ENCODE measurements at regions of chr1 and their contacts with region 1.

Region 1: GRCh38 chr1:59971464-59971911 is 44.9 kb upstream of the CYP2J2 start:
- DNase-seq: peak; percentile 75
- ATAC-seq: peak; percentile 88

Region 2: GRCh38 chr1:59750328-59751003 is 221.0 kb before region 1 on chr1:
- intact Hi-C with region 1: no loop called
- DNase-seq: no peak
- ATAC-seq: peak; percentile 17

Region 3: DNA sequence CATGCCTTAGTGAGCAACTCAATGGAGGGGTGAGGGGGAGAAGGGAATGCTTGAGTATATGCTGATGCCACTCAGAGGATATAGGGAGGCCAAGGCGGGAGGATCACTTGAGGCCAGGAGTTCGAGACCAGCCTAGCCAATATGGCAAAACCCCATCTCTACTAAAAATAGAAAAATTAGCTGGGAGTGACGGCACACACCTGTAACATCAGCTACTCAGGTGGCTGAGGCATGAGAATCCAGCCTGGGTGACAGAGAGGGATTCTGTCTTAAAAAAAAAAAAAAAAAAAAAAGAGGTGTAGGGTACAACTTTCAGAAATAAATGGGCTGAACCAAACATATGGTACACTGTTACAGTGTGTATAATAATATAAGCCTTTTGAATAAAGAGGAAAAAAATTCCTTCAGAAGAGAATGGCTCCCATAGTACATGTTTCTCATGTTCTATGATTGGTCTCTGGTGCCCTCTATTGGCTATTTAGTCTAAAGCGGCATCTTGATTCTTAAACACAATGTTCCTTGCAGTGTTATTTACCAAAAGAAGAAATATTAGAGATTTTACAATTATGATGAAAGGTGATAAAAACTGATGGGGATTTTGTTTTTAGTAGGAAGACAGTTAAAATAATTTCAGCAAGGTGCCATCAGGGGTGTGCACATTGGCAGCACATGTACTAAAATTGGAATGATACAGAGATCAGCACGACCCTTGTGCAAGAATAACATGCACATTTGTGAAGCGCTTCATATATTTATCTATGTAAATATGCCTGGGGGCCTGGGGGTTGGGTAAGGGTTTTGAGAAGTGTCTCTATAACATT is 1880.6 kb after region 1 on chr1:
- intact Hi-C with region 1: loop called (anchors 10 kb)
- DNase-seq: no peak
- ATAC-seq: peak; percentile 87

Measured in Right ventricle myocardium superior (tissue), 1 donor.